Activated B cell treated with CpG ODN at 0.5 μM for 24 hours (primary cell): ENCODE measurements at regions of chr19 and their contacts with region 1.

Region 1: DNA sequence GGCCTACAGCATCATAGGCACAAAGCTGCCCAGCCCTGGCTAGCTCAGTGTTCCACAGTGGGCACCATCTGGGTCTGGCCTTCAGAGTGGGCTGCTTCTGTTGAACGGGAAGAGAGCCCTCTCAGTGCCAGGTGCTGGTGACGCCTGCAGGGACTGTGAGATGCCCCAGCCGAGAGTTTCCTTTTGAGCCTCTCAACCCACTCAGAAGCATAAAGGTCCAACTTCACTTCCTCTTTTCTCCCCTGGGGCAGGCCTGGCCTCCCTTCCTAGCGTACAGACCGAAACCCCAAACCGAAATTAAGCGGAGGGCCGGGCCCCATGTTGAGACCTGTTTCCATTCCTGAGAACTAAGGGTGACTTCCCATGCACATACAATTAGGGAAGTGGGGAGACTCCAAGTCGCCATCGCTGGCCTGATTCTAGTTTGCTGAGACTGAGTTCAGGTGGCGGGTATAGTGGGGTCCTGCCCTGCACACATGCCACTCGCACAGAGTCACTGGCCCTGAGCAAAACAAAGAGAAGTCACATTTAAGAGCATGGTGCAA is 6.9 kb downstream of the RAB8A start:
- DNase-seq: peak; percentile 76
- ATAC-seq: peak; percentile 87
- H3K4me3 Mint-ChIP-seq: peak overlapping the region; percentile 73
- H3K27ac Mint-ChIP-seq: peak overlapping the region; percentile 98
- H3K4me1 Mint-ChIP-seq: peaks cover 80% of the 10 kb centered on the region
- H3K27me3 Mint-ChIP-seq: no peaks in the 10 kb centered on the region
- CTCF ChIP-seq: no peak

Region 2: DNA sequence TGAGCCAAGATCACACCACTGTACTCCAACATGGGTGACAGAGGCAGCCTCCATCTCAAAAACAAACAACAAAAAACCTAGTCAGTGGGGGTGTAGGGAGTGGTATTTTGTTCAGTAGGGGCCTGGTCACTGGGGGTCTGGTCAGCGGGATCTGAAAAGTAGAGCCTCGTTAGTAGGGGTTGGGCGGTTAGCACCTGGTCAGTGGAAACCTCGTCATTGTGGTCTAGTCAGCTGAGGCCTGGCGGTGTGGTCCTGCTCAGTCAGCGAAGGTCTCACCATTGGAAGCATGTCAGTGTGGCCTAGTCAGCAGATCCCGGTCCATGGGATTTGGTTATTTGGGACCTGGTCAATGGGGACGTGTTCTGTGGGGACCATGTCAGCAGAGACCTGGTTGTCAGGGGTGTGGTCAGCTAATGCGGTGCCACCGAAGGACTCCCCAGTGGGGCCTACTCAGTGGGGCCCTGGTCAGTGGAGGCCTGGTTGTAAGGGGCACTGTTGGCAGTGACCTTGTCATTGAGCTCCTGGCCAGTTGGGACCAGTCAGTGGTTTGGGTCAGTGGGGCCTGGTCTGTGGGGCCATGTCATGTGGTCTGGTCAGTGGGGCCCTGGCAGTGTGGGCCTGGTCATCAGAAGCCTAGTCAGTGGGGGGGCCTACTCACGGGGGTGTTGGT is 105.2 kb before region 1 on chr19:
- CTCF ChIA-PET with region 1: no interaction called
- POLR2A ChIA-PET with region 1: no interaction called
- intact Hi-C with region 1: no loop called
- DNase-seq: no peak
- ATAC-seq: no peak
- H3K4me3 Mint-ChIP-seq: no peak overlapping the region
- H3K27ac Mint-ChIP-seq: no peak overlapping the region
- H3K4me1 Mint-ChIP-seq: no peaks in the 10 kb centered on the region
- H3K27me3 Mint-ChIP-seq: peaks cover 2% of the 10 kb centered on the region
- CTCF ChIP-seq: no peak

Region 3: GRCh38 chr19:16136185-16136999 is 17.8 kb after region 1 on chr19:
- CTCF ChIA-PET with region 1: interaction called, 14 read pairs
- POLR2A ChIA-PET with region 1: interaction called, 338 read pairs
- intact Hi-C with region 1: no loop called
- DNase-seq: no peak
- ATAC-seq: no peak
- H3K4me3 Mint-ChIP-seq: no peak overlapping the region
- H3K27ac Mint-ChIP-seq: peak overlapping the region; percentile 41
- H3K4me1 Mint-ChIP-seq: peaks cover 51% of the 10 kb centered on the region
- H3K27me3 Mint-ChIP-seq: no peaks in the 10 kb centered on the region
- CTCF ChIP-seq: no peak

Region 4: GRCh38 chr19:16247353-16248182 is 129.0 kb after region 1 on chr19:
- CTCF ChIA-PET with region 1: no interaction called
- POLR2A ChIA-PET with region 1: no interaction called
- intact Hi-C with region 1: no loop called
- DNase-seq: peak; percentile 85
- ATAC-seq: peak; percentile 88
- H3K4me3 Mint-ChIP-seq: peak overlapping the region; percentile 17
- H3K27ac Mint-ChIP-seq: peak overlapping the region; percentile 32
- H3K4me1 Mint-ChIP-seq: peaks cover 41% of the 10 kb centered on the region
- H3K27me3 Mint-ChIP-seq: no peaks in the 10 kb centered on the region
- CTCF ChIP-seq: peak; percentile 33

Region 5: DNA sequence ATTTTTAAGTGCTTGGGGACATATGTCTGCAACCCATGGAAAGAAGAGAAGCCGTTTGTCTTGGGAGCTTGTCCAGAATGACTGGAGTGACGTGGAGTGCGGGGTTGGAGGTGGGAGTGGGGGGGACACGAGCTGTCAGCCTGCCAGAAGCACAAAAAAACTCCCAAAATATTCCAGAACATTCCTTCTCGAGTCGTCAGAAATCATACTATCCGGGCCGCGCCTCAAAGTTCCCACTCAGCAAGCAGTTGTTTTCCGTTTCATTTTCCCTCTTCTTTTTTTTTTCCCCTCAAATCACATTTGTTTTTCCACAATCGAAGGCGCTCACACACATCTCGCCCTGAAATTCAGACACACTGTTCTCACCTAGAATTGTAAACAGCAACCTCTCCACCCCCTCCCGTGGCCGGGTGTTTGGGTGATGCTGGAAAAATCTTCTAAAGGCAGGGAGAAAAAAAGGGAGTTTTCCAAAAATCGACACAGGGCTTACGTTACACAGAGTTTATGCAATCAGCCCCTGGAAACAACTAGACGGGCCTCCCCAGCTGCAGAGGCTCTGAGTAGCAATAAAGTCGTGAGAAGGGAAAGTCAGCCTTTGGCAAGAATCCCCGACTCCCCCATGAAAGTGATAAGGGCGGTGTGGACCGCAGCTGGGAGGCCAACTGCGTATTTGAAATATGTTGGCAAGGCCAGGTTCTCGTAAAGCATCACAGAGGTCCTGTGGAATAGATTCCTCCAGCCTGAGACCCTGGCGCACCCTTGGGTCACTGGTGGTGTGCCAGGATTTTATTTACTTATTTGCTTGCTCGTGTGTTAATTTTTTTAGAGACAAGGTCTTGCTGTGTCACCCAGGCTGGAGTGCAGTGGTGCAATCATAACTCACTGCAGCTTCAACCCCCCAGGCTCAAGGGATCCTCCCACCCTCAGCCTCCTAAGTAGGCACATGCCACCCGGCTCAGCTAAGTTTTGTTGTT is 174.8 kb after region 1 on chr19:
- CTCF ChIA-PET with region 1: no interaction called
- POLR2A ChIA-PET with region 1: no interaction called
- intact Hi-C with region 1: no loop called
- DNase-seq: no peak
- ATAC-seq: no peak
- H3K4me3 Mint-ChIP-seq: no peak overlapping the region
- H3K27ac Mint-ChIP-seq: no peak overlapping the region
- H3K4me1 Mint-ChIP-seq: no peaks in the 10 kb centered on the region
- H3K27me3 Mint-ChIP-seq: no peaks in the 10 kb centered on the region
- CTCF ChIP-seq: no peak

Region 6: GRCh38 chr19:16397791-16398471 is 279.4 kb after region 1 on chr19:
- CTCF ChIA-PET with region 1: no interaction called
- POLR2A ChIA-PET with region 1: no interaction called
- intact Hi-C with region 1: loop called (anchors 5 kb)
- DNase-seq: no peak
- ATAC-seq: no peak
- H3K4me3 Mint-ChIP-seq: peak overlapping the region; percentile 59
- H3K27ac Mint-ChIP-seq: peak overlapping the region; percentile 91
- H3K4me1 Mint-ChIP-seq: peaks cover 77% of the 10 kb centered on the region
- H3K27me3 Mint-ChIP-seq: no peaks in the 10 kb centered on the region
- CTCF ChIP-seq: no peak